PC-3 (cell line): ENCODE measurements at regions of chr4 and their contacts with region 1.

Region 1: DNA sequence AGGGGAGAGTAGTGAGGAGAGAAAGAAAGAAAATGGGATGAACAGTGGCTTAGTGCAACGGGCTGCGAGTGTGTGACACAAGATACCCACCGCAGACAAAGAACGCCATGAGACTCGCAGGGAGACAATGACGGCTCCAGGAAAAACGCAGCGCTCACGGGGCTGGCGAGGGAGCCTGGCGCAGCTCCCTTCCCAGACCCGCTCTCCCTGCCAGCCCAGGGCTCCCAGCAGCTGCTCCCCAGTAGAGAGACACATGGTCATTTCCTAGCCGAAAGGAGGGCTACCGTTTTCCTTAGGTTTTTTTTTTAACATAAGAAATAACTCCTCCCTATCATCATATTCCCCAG is 149.5 kb downstream of the MAML3 start:
- DNase-seq: peak; percentile 48
- ATAC-seq: peak; percentile 74
- H3K4me3 ChIP-seq: peak overlapping the region; percentile 64
- H3K27ac ChIP-seq: 0 out of 2 replicates have a peak overlapping the region, but pooled peaks have one; percentile 8
- H3K4me1 ChIP-seq: peaks cover 22% of the 10 kb centered on the region
- H3K27me3 ChIP-seq: no peaks in the 10 kb centered on the region
- CTCF ChIP-seq: no peak

Region 2: GRCh38 chr4:139656614-139657486 is 347.7 kb before region 1 on chr4:
- CTCF ChIA-PET with region 1: interaction called, 8 read pairs
- POLR2A ChIA-PET with region 1: no interaction called
- intact Hi-C with region 1: loop called (anchors 2 kb)
- DNase-seq: peak; percentile 80
- ATAC-seq: peak; percentile 87
- H3K4me3 ChIP-seq: peak overlapping the region; percentile 53; the same call in 1 of the 2 replicates
- H3K27ac ChIP-seq: 0 out of 2 replicates have a peak overlapping the region, but pooled peaks have one; percentile 30
- H3K4me1 ChIP-seq: peaks cover 14% of the 10 kb centered on the region
- H3K27me3 ChIP-seq: no peaks in the 10 kb centered on the region
- CTCF ChIP-seq: peak; percentile 72

Region 3: DNA sequence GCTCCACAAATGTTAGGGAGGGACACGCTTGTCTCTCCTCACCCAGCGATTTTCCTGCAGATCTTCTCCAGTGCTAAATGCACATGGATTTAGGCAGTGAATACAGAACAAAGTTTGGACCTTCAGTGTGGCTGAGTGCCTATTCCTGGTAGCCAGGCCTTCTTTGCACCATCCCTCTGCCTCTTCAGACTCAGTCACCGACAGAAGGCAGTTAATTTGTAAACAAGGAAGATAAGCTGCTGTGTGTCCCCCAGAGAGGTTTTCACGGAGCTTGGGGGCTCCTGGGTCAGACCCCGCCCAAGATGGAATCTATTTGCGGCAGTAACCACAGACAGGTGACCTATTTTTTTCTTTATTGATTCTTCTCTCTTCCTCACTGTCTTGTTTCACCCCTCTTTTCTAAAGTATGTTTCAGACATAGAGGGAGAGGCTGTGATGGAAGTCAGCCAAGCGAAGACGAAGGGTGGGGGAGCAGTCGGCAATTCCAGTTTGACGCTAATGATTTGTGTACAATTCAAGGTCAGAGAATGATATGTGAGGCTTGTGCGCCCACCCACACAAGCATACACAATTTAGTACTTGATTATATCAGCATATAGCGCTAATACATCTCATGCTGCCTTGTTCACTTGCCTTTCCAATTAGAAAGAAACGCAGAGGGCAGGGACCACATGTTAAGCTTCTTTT is 138.1 kb before region 1 on chr4:
- CTCF ChIA-PET with region 1: no interaction called
- POLR2A ChIA-PET with region 1: no interaction called
- intact Hi-C with region 1: loop called (anchors 10 kb)
- DNase-seq: no peak
- ATAC-seq: no peak
- H3K4me3 ChIP-seq: no peak overlapping the region
- H3K27ac ChIP-seq: no peak overlapping the region
- H3K4me1 ChIP-seq: peaks cover 8% of the 10 kb centered on the region
- H3K27me3 ChIP-seq: no peaks in the 10 kb centered on the region
- CTCF ChIP-seq: no peak

Region 4: DNA sequence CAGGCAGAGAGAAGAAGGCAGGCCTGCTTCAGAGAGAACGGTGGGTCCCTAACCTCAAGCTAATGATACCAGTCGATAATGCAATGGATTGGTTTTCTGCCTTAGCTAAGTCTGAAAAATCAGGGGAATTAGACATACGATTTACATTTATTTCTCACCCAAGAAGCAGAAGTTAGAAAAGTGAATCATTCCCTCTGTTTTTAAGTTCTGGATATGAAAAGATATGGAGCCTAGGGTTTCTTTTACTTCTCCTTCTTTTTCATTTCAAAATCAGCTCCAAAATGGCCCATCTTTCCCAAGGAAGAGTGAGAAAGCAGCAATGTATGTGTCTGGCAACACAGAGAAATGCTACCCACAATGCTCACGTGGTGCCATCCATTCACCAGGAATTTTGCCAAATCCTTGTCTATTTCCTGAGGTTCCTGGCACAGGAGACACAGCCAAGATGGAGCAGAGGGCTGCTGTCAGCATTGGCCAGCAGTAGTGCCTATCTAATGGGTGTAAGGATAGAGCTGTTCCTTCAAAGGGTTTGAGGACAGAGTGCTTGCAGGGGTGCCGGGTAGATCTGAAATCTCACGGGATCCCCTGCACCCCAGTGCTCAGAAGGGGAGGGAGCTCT is 82.0 kb before region 1 on chr4:
- CTCF ChIA-PET with region 1: no interaction called
- POLR2A ChIA-PET with region 1: no interaction called
- intact Hi-C with region 1: loop called (anchors 5 kb)
- DNase-seq: peak; percentile 52
- ATAC-seq: peak; percentile 35
- H3K4me3 ChIP-seq: no peak overlapping the region
- H3K27ac ChIP-seq: peak overlapping the region; percentile 29; the same call in 1 of the 2 replicates
- H3K4me1 ChIP-seq: peaks cover 21% of the 10 kb centered on the region
- H3K27me3 ChIP-seq: no peaks in the 10 kb centered on the region
- CTCF ChIP-seq: no peak